ENCODE measurements at regions of chr3 and their contacts with region 1.

Region 1: GRCh38 chr3:188052169-188053030 is 101.6 kb upstream of the LPP start:
- DNase-seq: no peak
- H3K4me3 ChIP-seq: no peak overlapping the region
- H3K27ac ChIP-seq: peak overlapping the region; percentile 78
- H3K4me1 ChIP-seq: peaks cover 11% of the 10 kb centered on the region
- H3K27me3 ChIP-seq: no peaks in the 10 kb centered on the region
- CTCF ChIP-seq: no peak
- POLR2A ChIP-seq: no peak

Region 2: GRCh38 chr3:188262913-188263683 is 210.7 kb after region 1 on chr3:
- intact Hi-C with region 1: loop called (anchors 10 kb)
- DNase-seq: no peak
- H3K4me3 ChIP-seq: no peak overlapping the region
- H3K27ac ChIP-seq: peak overlapping the region; percentile 86
- H3K4me1 ChIP-seq: peaks cover 63% of the 10 kb centered on the region
- H3K27me3 ChIP-seq: no peaks in the 10 kb centered on the region
- CTCF ChIP-seq: no peak
- POLR2A ChIP-seq: no peak

Region 3: GRCh38 chr3:188954590-188955208 is 902.3 kb after region 1 on chr3:
- intact Hi-C with region 1: loop called (anchors 10 kb)
- DNase-seq: no peak
- H3K4me3 ChIP-seq: no peak overlapping the region
- H3K27ac ChIP-seq: peak overlapping the region; percentile 30
- H3K4me1 ChIP-seq: peaks cover 31% of the 10 kb centered on the region
- H3K27me3 ChIP-seq: no peaks in the 10 kb centered on the region
- CTCF ChIP-seq: peak; percentile 67 to 96 (median 95)
- POLR2A ChIP-seq: no peak